ENCODE measurements at regions of chr10 and their contacts with region 1.

Region 1: DNA sequence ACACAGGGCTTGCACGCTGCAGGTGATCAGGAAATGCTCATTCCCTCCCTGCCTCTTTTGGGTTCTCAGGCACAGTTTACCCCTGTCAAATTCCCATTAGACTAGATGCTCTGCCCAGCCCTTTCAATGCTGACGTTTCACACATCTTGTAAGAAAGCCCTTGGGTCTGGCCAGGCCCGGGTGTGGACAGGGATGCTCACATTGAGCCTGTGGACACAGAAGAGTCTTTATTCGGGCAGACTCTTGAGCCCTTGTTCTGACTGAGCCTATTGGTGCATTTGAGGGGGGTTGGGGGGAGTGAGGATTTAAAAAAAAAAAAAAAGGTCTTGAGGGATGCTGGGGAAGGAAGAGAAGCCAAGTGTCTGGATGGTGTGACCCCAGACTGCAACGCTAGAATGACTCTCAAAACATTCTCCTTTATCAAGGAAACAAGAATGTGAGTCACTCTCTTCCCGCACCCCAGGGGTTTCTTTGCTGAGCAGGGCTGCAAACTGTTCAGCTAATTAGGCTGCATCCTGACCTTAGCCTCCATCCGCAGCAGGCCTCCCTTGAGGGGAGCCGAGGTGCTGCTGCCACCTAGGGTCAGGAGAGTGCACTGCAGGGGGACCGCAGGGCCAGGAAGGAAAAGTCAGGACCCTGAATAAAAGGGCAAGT is 53.6 kb upstream of the TMEM72 start:
- DNase-seq: peak; percentile 82
- ATAC-seq: peak; percentile 91

Region 2: GRCh38 chr10:44398747-44399658 is 458.5 kb before region 1 on chr10:
- intact Hi-C with region 1: loop called (anchors 10 kb)
- DNase-seq: no peak
- ATAC-seq: no peak

Region 3: GRCh38 chr10:44990302-44990655 is 132.8 kb after region 1 on chr10:
- intact Hi-C with region 1: no loop called
- DNase-seq: peak; percentile 61
- ATAC-seq: peak; percentile 36